A549 (cell line): ENCODE measurements at regions of chr1 and their contacts with region 1.

Region 1: GRCh38 chr1:44799770-44800584 is at the start of gene PLK3:
- DNase-seq: peak; percentile 79 to 96
- ATAC-seq: peak; percentile 88 to 91
- H3K4me3 ChIP-seq: peak within 1 kb of the TSS; percentile 98
- H3K27ac ChIP-seq: peak within 1 kb of the TSS; percentile 91 to 95
- H3K4me1 ChIP-seq: peaks cover 34% of the 10 kb centered on the region
- CTCF ChIP-seq: peak; percentile 64
- EP300 ChIP-seq: no peak
- POLR2A ChIP-seq: peak; percentile 85
- RAD21 ChIP-seq: peak; percentile 68 to 76
- polyA plus RNA-seq, gene PLK3: 12.6 and 16.0 TPM in 2 replicates

Region 2: DNA sequence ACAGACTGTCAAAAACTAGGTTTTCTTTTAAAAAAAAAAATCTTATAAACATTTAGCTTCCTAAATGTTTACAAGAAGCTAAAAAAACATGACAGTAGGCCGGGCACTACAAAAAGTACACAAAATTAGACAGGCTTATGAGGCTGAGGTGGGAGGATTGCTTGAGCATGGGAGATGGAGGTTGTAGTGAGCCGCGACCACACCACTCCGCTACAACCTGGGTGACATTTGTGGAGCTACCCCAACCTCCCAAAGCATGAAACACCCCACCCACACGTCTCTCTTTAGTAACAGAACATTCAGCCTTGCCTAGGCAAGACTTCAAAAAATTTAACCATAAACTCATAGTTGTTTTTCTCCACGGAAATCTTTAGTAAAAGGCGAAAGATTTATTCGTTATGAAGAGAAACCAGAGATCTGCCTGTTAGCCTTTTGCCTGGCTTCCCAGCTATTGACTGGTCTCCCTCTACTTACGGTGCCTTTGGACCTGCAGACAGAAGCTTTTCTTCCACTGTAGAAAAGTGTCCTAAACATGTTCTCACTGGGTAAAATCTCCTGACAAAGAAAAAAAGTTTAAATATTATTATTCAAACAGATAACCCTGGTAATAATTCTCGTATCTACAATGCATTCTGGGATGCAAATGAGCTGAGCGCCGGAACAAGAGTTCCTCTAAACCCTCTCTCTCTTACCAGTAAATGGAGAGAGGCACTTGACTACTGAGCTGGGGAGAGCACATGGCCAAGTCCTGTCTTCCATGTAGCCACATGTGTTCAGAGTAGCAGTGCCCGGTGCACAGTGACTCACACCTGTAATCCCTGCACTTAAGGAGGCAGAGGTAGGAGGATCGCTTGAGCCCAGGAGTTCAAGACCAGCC is 78.3 kb before region 1 on chr1:
- CTCF ChIA-PET with region 1: interaction called, 3 read pairs
- POLR2A ChIA-PET with region 1: interaction called, 21 read pairs
- DNase-seq: peak; percentile 93 to 95
- ATAC-seq: peak; percentile 96 to 98
- H3K4me3 ChIP-seq: no peak overlapping the region
- H3K27ac ChIP-seq: peak overlapping the region; percentile 84 to 90
- H3K4me1 ChIP-seq: peaks cover 8% of the 10 kb centered on the region; the same call in 1 of the 3 replicates
- CTCF ChIP-seq: no peak
- EP300 ChIP-seq: 0 out of 5 replicates have a peak, but pooled peaks of 1 of the 2 experiments have one; percentile 20
- POLR2A ChIP-seq: peak; percentile 100
- RAD21 ChIP-seq: no peak

Region 3: DNA sequence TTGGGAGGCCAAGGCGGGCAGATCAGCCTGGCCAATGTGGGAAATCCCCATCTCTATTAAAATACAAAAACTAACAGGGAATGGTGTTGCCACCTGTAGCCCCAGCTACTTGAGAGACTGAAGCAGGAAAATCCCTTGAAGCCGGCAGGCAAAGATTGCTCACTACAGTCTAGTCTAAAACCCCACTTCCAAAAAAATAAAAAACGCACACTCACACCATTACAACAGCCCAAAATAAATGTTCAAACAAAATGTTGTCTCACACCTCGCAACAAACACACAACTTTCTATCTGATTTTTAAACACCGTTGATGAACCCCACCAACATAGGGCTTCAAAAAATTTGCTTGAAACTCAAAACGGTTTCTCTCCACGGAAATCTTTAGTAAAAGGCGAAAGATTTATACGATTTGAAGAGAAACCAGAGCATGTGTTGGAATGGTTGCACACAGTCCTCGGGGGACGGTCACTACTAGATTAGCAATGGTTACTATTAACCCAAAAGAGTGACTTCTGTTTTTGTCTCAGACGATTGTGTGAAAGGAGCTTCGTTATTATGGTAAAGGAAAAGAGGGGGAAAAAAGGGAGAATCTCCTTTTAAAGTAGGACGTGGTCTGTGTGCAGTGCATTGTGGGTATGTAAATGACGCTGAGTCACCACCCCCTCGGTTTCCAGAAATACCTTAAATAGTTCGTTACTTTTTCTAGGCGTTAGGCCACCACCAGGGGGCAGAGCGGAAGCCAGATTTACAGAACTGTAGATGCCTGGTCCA is 69.0 kb before region 1 on chr1 and contains the start of gene RNU5D-1:
- CTCF ChIA-PET with region 1: interaction called, 4 read pairs
- POLR2A ChIA-PET with region 1: interaction called, 17 read pairs
- DNase-seq: peak; percentile 72 to 94
- ATAC-seq: peak; percentile 90 to 93
- H3K4me3 ChIP-seq: peak within 1 kb of the TSS; percentile 35
- H3K27ac ChIP-seq: peak within 1 kb of the TSS; percentile 86 to 94
- H3K4me1 ChIP-seq: peaks cover 19% of the 10 kb centered on the region
- CTCF ChIP-seq: peak; percentile 68
- EP300 ChIP-seq: no peak
- POLR2A ChIP-seq: peak; percentile 81
- RAD21 ChIP-seq: no peak
- polyA plus RNA-seq, gene RNU5D-1: not detected in 2 replicates

Region 4: DNA sequence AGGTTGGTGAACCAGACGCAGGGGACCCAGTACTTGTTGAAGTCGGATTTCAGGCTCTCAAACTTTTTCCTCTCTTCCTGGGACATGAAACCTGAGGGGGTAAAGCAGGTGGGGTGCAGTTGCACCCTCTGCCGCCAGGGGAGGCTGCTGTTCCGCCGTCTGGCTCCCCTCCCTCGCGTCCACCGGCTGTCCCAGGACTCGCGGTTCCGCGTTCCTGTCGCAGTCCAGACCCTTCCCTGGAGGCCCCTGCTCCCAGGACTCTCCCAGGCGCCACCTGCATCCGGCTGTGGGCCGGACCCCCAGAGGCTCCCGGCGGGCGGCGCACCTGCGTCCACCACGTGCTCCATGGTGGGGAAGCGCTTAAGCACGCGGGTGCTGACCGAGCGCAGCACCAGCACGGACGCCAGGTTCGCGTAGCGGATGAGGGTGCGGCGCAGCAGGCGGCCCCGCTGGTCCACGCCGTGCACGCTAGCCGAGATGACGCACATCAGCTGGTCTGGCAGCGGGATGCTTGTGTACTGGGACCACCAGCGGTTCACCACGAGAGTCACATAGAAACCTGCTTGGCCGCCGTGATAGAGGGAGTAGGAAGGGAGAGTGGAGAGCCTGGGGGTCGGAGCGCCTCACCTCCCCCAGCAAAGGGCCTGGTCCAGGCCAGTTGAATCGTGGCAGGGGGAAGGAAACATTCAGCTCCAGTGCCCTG is 13.7 kb before region 1 on chr1:
- CTCF ChIA-PET with region 1: interaction called, 44 read pairs
- POLR2A ChIA-PET with region 1: interaction called, 21 read pairs
- DNase-seq: peak; percentile 75 to 77
- ATAC-seq: peak; percentile 63 to 70
- H3K4me3 ChIP-seq: peak overlapping the region; percentile 49
- H3K27ac ChIP-seq: peak overlapping the region; percentile 89 to 93
- H3K4me1 ChIP-seq: peaks cover 6% of the 10 kb centered on the region
- CTCF ChIP-seq: peak; percentile 76
- EP300 ChIP-seq: no peak
- POLR2A ChIP-seq: peak; percentile 40
- RAD21 ChIP-seq: peak; percentile 68 to 74

Region 5: DNA sequence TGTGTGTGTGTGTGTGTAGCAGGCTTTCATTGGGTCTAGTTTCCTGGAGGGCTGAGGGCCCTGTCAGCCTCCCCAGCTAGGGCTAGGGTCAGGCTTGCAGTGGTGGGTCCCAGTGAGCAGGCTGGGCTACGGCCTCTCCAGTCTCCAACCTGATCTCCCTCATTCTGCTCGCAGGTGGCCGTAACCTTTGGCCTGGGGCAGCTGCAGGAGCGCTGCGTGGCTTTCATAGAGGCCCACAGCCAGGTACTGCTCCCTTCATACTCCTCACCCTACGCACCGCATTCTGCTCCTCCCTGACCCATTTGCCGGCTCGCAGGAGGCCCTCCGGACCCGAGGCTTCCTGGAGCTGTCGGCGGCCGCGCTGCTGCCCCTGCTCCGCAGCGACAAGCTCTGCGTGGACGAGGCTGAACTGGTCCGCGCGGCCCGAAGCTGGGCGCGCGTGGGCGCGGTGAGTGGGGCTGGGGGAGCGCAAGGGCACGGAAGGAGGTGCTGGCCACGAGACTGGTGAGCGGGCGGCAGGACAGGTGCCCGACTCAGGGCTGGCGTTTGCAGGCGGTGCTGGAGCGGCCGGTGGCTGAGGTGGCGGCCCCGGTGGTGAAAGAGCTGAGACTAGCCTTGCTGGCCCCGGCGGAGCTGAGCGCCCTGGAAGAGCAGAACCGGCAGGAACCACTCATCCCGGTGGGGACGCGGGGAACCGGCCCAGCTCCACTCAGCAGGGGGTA is 13.0 kb after region 1 on chr1:
- CTCF ChIA-PET with region 1: interaction called, 41 read pairs
- POLR2A ChIA-PET with region 1: interaction called, 40 read pairs
- DNase-seq: no peak
- ATAC-seq: peak; percentile 4 to 5; a peak in 4 of 6 replicates
- H3K4me3 ChIP-seq: no peak overlapping the region
- H3K27ac ChIP-seq: peak overlapping the region; percentile 76 to 98
- H3K4me1 ChIP-seq: peaks cover 59% of the 10 kb centered on the region
- CTCF ChIP-seq: no peak
- EP300 ChIP-seq: no peak
- POLR2A ChIP-seq: no peak
- RAD21 ChIP-seq: no peak